Activated CD8-positive, alpha-beta memory T cell treated with anti-CD3 and anti-CD28 coated beads, Interleukin-2, amount 10 ng/mL, durations not matched to agents 7 days and 5 days (primary cell): ENCODE measurements at regions of chr1 and their contacts with region 1.

Region 1: GRCh38 chr1:156797212-156797871 is 19.3 kb downstream of the SH2D2A start:
- DNase-seq: peak; percentile 76
- ATAC-seq: peak; percentile 77
- H3K4me3 Mint-ChIP-seq: no peak overlapping the region
- H3K27ac Mint-ChIP-seq: peak overlapping the region; percentile 10
- H3K4me1 Mint-ChIP-seq: peaks cover 30% of the 10 kb centered on the region
- H3K27me3 Mint-ChIP-seq: no peaks in the 10 kb centered on the region

Region 2: DNA sequence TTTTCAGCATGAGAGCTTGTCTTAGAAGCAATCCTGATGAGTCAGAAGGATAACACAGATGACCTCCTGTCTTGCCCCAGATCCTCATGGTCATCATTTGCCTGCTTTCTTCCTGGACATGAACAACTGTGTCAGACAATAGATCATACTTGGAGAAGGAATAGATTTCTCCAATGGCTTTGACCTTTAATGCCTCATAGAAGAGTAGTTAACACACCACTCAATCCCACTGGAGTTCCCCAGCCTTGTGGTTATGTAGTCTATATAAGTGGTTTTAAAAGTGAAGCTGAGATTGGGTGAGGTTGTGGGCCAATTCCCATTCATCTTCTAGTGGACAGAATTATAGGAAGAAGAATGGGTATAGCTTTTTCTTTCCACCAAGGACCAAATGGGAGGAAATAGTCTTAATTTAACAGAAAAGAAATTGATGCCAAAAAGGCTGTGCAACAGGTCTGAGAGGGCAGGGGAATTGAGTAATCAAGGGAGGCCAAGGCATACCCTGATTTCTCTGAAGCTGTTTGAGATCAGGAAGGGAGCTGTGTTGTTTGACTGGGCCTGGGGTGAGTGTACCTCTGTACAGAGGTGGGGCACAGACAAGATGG is 15.7 kb before region 1 on chr1:
- CTCF ChIA-PET with region 1: interaction called, 11 read pairs
- DNase-seq: no peak
- ATAC-seq: no peak
- H3K4me3 Mint-ChIP-seq: no peak overlapping the region
- H3K27ac Mint-ChIP-seq: no peak overlapping the region
- H3K4me1 Mint-ChIP-seq: peaks cover 29% of the 10 kb centered on the region
- H3K27me3 Mint-ChIP-seq: no peaks in the 10 kb centered on the region

Region 3: GRCh38 chr1:156936721-156937220 is 139.4 kb after region 1 on chr1:
- CTCF ChIA-PET with region 1: no interaction called
- DNase-seq: no peak
- ATAC-seq: no peak
- H3K4me3 Mint-ChIP-seq: no peak overlapping the region
- H3K27ac Mint-ChIP-seq: no peak overlapping the region
- H3K4me1 Mint-ChIP-seq: no peaks in the 10 kb centered on the region
- H3K27me3 Mint-ChIP-seq: peaks cover 27% of the 10 kb centered on the region